Mammary epithelial cell (primary cell): ENCODE measurements at regions of chr6 and their contacts with region 1.

Region 1: DNA sequence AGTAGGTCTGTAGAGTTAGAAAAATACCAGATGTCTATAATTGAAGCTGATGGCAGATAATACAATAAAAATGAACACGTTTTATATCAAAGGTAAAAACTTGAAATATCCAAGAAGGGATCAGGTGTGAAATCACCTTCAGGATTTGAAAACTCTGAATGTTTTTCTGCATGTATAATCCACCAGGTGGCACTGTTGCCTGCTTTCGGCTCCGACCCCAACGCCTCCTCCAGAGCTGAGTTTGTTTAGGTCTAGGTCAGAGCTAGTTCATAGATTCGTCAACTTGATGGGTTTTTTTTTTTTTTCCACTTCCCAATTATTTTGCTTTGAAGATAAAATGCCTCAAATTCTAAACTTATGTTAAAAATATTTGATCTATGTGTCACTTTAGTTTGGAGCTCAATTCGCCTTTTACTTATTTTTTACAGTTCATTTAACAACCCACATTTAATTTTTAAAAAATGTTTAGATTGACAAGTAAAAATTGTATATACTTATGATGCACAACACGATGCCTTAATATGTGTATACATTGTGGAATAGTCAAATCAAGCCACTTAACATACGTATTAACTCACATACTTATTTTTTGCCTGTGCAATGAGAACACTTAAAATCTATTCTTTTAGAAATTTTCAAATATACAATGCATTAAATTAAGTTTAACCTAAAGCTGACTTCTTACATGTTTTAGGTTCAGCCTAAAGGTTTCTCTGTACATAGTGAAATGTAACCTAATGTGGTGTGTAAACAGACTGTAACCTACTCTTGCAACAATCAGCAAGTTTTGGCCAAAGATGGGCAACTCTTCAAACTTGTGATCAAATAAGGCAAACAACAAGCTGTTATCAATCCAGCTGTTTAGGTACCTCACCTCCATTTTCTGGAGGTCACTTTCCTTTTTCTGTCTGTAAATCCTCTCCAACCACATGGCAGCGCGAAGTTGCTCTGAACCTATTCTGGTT is 39.4 kb upstream of the ENPP4 start:
- DNase-seq: peak; percentile 41
- H3K4me3 ChIP-seq: no peak overlapping the region
- H3K27ac ChIP-seq: no peak overlapping the region
- H3K4me1 ChIP-seq: no peaks in the 10 kb centered on the region
- H3K27me3 ChIP-seq: no peaks in the 10 kb centered on the region
- CTCF ChIP-seq: peak; percentile 73 to 76

Region 2: GRCh38 chr6:45086360-45087084 is 1003.9 kb before region 1 on chr6:
- CTCF ChIA-PET with region 1: no interaction called
- dilution Hi-C with region 1: no loop called
- in situ Hi-C with region 1: no loop called
- intact Hi-C with region 1: no loop called
- DNase-seq: no peak
- H3K4me3 ChIP-seq: no peak overlapping the region
- H3K27ac ChIP-seq: no peak overlapping the region
- H3K4me1 ChIP-seq: no peaks in the 10 kb centered on the region
- H3K27me3 ChIP-seq: no peaks in the 10 kb centered on the region
- CTCF ChIP-seq: peak in 1 of 2 donors; percentile 6

Region 3: GRCh38 chr6:45930420-45931040 is 159.9 kb before region 1 on chr6:
- CTCF ChIA-PET with region 1: no interaction called
- dilution Hi-C with region 1: no loop called
- in situ Hi-C with region 1: no loop called
- intact Hi-C with region 1: loop called (anchors 1 kb)
- DNase-seq: peak; percentile 32
- H3K4me3 ChIP-seq: no peak overlapping the region
- H3K27ac ChIP-seq: no peak overlapping the region
- H3K4me1 ChIP-seq: no peaks in the 10 kb centered on the region
- H3K27me3 ChIP-seq: no peaks in the 10 kb centered on the region
- CTCF ChIP-seq: peak; percentile 97 to 98

Region 4: GRCh38 chr6:45959534-45960145 is 130.8 kb before region 1 on chr6:
- CTCF ChIA-PET with region 1: no interaction called
- dilution Hi-C with region 1: no loop called
- in situ Hi-C with region 1: no loop called
- intact Hi-C with region 1: no loop called
- DNase-seq: peak; percentile 76
- H3K4me3 ChIP-seq: no peak overlapping the region
- H3K27ac ChIP-seq: no peak overlapping the region
- H3K4me1 ChIP-seq: no peaks in the 10 kb centered on the region
- H3K27me3 ChIP-seq: no peaks in the 10 kb centered on the region
- CTCF ChIP-seq: no peak

Region 5: GRCh38 chr6:46170357-46171289 is 80.2 kb after region 1 on chr6 and contains the start of gene ENPP5:
- CTCF ChIA-PET with region 1: interaction called, 16 read pairs
- dilution Hi-C with region 1: no loop called
- in situ Hi-C with region 1: no loop called
- intact Hi-C with region 1: no loop called
- DNase-seq: peak; percentile 86
- H3K4me3 ChIP-seq: peak within 1 kb of the TSS; percentile 67 to 82 (median 78)
- H3K27ac ChIP-seq: no peak within 1 kb of the TSS
- H3K4me1 ChIP-seq: peaks cover 6% of the 10 kb centered on the region
- H3K27me3 ChIP-seq: no peaks in the 10 kb centered on the region
- CTCF ChIP-seq: no peak
- total RNA-seq, gene ENPP5: 2.9 to 27.0 TPM

Region 6: GRCh38 chr6:46221222-46221793 is 130.9 kb after region 1 on chr6:
- CTCF ChIA-PET with region 1: no interaction called
- dilution Hi-C with region 1: no loop called
- in situ Hi-C with region 1: no loop called
- intact Hi-C with region 1: loop called (anchors 1 kb)
- DNase-seq: peak; percentile 21
- H3K4me3 ChIP-seq: no peak overlapping the region
- H3K27ac ChIP-seq: no peak overlapping the region
- H3K4me1 ChIP-seq: no peaks in the 10 kb centered on the region
- H3K27me3 ChIP-seq: peaks cover 2% of the 10 kb centered on the region
- CTCF ChIP-seq: peak; percentile 83 to 88

Region 7: DNA sequence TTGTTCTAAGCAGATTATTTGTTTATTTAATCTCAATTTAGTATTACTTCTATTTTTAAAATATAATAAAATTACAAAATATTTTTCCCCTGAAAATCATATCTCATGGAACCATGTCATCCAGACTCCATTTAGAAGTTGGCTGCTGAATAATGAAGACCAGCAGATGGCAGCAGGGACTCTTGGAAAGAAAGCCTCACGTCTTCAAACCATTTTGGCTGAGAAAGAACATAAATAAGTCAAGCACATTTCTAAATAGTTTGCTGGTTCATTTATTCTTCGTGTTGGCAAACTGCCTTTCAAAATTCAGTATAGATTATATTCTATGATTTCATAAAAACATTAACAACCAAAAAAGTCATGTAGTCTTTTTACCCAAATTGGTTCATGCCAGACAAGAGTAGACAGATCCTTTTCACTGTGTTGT is 329.2 kb after region 1 on chr6:
- CTCF ChIA-PET with region 1: no interaction called
- dilution Hi-C with region 1: no loop called
- in situ Hi-C with region 1: loop called (anchors 25 kb)
- intact Hi-C with region 1: loop called (anchors 2 kb)
- DNase-seq: peak; percentile 48
- H3K4me3 ChIP-seq: no peak overlapping the region
- H3K27ac ChIP-seq: no peak overlapping the region
- H3K4me1 ChIP-seq: no peaks in the 10 kb centered on the region
- H3K27me3 ChIP-seq: peaks cover 5% of the 10 kb centered on the region
- CTCF ChIP-seq: peak; percentile 81 to 82

Region 8: DNA sequence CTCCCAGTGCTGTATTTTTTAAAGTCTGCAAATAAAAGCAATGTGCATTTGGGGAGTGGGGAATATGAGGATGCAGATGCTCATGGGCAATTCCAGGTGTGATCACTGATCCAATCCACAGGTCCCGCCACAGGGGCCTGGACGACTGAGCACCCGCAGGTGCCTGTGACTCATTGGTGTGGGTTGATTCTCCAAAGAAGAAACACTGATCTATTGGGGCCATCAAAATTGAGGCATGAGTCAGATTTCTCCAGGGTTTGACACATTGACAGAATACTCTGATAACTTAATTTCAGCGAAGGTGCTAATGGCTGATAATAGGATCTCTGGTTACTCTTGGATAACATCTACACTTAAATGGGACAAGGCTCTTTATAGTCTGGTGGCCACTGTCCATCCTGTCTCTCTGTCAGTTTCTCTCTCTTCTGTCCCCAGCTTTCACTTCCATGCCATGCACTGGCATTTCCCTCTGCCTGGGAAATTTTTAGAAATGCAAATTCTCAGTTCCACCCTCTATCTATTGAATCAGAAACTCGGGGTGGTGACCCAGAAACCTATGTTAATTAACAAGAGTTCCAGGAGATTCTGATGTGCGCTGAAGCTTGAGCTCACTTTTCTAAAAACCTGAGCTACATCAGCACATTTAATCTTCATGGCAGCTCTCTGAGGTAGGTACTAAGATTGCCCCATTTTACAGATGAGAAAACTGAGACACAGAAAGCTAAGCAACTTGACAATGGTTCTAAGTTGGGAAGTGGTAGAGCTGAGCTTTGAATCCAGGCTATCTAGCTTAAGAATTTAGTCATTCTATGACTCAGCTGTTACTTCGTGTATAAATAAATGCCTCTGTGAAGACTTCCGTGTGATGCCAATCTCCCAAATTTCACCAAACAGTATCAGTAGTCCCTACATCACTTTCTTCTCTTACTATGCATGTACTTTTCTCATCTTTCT is 411.0 kb after region 1 on chr6:
- CTCF ChIA-PET with region 1: no interaction called
- dilution Hi-C with region 1: no loop called
- in situ Hi-C with region 1: no loop called
- intact Hi-C with region 1: no loop called
- DNase-seq: peak; percentile 16
- H3K4me3 ChIP-seq: no peak overlapping the region
- H3K27ac ChIP-seq: no peak overlapping the region
- H3K4me1 ChIP-seq: no peaks in the 10 kb centered on the region
- H3K27me3 ChIP-seq: peaks cover 4% of the 10 kb centered on the region
- CTCF ChIP-seq: no peak

Region 9: DNA sequence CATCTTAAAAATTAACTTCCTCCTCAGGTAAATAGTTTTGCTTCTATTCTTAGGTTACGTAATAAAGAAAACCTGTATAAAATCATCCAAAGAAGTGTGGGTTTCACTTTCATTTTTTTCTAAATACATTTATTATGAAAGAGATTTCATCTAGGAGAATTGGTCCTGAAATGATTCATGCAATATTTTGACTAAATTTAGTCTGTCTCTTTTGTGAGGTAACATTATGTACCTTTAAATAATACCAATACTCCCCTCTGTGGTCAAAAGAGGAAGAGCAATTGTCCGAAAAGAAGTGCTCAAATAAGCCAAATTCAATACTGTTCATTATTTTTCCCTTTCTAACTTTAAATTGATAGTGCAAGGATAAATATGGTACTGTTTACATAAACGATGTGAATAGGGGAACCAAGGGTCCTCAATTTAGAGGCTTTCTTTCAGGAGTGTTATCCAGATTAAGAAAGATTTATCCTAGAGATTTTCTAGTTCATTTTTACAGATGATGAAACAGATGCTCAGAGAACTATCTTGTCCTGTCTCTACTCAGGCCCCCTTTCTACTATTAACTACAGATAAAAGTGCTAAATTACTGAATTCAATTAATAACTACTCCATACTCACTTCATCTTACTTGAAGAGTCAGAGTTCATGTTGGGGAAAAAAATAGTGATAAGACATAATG is 536.0 kb after region 1 on chr6:
- CTCF ChIA-PET with region 1: no interaction called
- dilution Hi-C with region 1: no loop called
- in situ Hi-C with region 1: no loop called
- intact Hi-C with region 1: loop called (anchors 5 kb)
- DNase-seq: peak; percentile 31
- H3K4me3 ChIP-seq: no peak overlapping the region
- H3K27ac ChIP-seq: no peak overlapping the region
- H3K4me1 ChIP-seq: no peaks in the 10 kb centered on the region
- H3K27me3 ChIP-seq: no peaks in the 10 kb centered on the region
- CTCF ChIP-seq: peak; percentile 62 to 66

Region 10: GRCh38 chr6:46993846-46994245 is 903.4 kb after region 1 on chr6:
- CTCF ChIA-PET with region 1: no interaction called
- dilution Hi-C with region 1: no loop called
- in situ Hi-C with region 1: no loop called
- intact Hi-C with region 1: loop called (anchors 2 kb)
- DNase-seq: peak; percentile 95
- H3K4me3 ChIP-seq: no peak overlapping the region
- H3K27ac ChIP-seq: peak overlapping the region; percentile 77
- H3K4me1 ChIP-seq: peaks cover 41% of the 10 kb centered on the region
- H3K27me3 ChIP-seq: no peaks in the 10 kb centered on the region
- CTCF ChIP-seq: no peak